ENCODE measurements at regions of chr7 and their contacts with region 1.

Region 1: GRCh38 chr7:139109188-139109982 is at the start of gene ZC3HAV1:
- DNase-seq: peak; percentile 93
- ATAC-seq: peak; percentile 73
- H3K4me3 Mint-ChIP-seq: peak within 1 kb of the TSS; percentile 99
- H3K27ac Mint-ChIP-seq: peak within 1 kb of the TSS; percentile 96
- H3K4me1 Mint-ChIP-seq: peaks cover 27% of the 10 kb centered on the region
- H3K27me3 Mint-ChIP-seq: no peaks in the 10 kb centered on the region
- total RNA-seq, gene ZC3HAV1: 110 to 120 TPM

Region 2: GRCh38 chr7:138459413-138460175 is 649.8 kb before region 1 on chr7:
- CTCF ChIA-PET with region 1: no interaction called
- POLR2A ChIA-PET with region 1: no interaction called
- intact Hi-C with region 1: loop called in 1 of 2 experiments (anchors 5 kb)
- DNase-seq: peak; percentile 99
- ATAC-seq: peak; percentile 88
- H3K4me3 Mint-ChIP-seq: peak overlapping the region; percentile 85
- H3K27ac Mint-ChIP-seq: peak overlapping the region; percentile 85
- H3K4me1 Mint-ChIP-seq: peaks cover 25% of the 10 kb centered on the region
- H3K27me3 Mint-ChIP-seq: no peaks in the 10 kb centered on the region

Region 3: GRCh38 chr7:138625849-138626230 is 483.5 kb before region 1 on chr7:
- CTCF ChIA-PET with region 1: no interaction called
- POLR2A ChIA-PET with region 1: no interaction called
- intact Hi-C with region 1: no loop called
- DNase-seq: peak; percentile 10
- ATAC-seq: peak; percentile 44
- H3K4me3 Mint-ChIP-seq: no peak overlapping the region
- H3K27ac Mint-ChIP-seq: peak overlapping the region; percentile 40
- H3K4me1 Mint-ChIP-seq: peaks cover 42% of the 10 kb centered on the region
- H3K27me3 Mint-ChIP-seq: no peaks in the 10 kb centered on the region

Region 4: DNA sequence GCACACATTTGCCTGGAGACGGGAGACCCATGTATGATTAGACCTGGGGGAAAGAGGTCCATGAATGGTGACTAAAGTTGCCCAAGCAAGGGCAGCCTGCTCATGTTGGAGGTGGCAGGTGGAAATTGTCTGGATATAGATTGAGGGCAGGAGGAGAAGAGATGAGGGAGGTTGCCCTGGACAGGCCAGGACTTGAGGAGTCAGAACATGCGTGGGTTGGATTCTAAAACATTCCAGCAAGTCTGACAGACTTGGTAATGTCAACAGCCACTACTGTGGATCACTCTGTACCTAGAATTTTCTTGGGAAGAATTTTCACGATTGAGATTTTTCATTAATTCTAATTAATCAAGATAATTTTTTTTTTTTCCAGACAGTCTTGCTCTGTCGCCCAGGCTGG is 389.1 kb before region 1 on chr7:
- CTCF ChIA-PET with region 1: no interaction called
- POLR2A ChIA-PET with region 1: no interaction called
- intact Hi-C with region 1: no loop called
- DNase-seq: no peak
- ATAC-seq: no peak
- H3K4me3 Mint-ChIP-seq: no peak overlapping the region
- H3K27ac Mint-ChIP-seq: no peak overlapping the region
- H3K4me1 Mint-ChIP-seq: peaks cover 8% of the 10 kb centered on the region
- H3K27me3 Mint-ChIP-seq: peaks cover 2% of the 10 kb centered on the region

Region 5: DNA sequence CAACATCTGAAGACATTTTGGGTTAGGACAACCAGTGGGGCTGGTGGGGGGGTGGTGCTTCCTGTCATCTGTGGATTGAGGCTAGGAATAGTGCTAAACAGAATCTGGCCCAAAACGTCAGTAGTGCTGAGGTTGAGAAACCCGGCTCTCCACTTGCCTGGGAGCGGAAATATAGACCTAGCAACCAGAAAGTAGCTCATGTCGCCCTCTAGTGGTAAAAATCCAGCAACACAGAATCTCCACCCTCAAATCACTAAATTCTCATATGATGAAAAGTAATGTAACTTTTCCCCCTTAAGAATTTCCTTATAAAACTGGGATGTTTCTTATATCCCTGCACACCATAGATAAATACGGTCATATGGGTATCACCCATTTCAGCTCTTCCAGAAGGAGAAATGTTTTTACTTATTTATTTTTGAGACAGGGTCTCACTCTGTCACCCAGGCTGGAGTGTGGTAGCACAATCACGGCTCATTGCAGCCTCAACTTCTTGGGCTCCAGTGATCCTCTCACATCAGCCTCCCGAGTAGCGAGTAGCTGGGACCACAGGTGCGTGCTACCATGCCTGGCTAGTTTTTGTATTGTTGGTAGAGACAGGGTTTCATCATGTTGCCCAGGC is 34.2 kb before region 1 on chr7:
- CTCF ChIA-PET with region 1: interaction called, 5 read pairs
- POLR2A ChIA-PET with region 1: no interaction called
- intact Hi-C with region 1: loop called in 1 of 2 experiments (anchors 5 kb)
- DNase-seq: peak; percentile 77
- ATAC-seq: peak; percentile 79
- H3K4me3 Mint-ChIP-seq: peak overlapping the region; percentile 24
- H3K27ac Mint-ChIP-seq: peak overlapping the region; percentile 76
- H3K4me1 Mint-ChIP-seq: peaks cover 70% of the 10 kb centered on the region
- H3K27me3 Mint-ChIP-seq: no peaks in the 10 kb centered on the region

Region 6: GRCh38 chr7:139095194-139095659 is 14.2 kb before region 1 on chr7:
- CTCF ChIA-PET with region 1: interaction called, 32 read pairs
- POLR2A ChIA-PET with region 1: interaction called, 27 read pairs
- intact Hi-C with region 1: loop called (anchors 1 kb)
- DNase-seq: peak; percentile 80
- ATAC-seq: peak; percentile 88
- H3K4me3 Mint-ChIP-seq: peak overlapping the region; percentile 70
- H3K27ac Mint-ChIP-seq: peak overlapping the region; percentile 92
- H3K4me1 Mint-ChIP-seq: peaks cover 89% of the 10 kb centered on the region
- H3K27me3 Mint-ChIP-seq: no peaks in the 10 kb centered on the region

Region 7: DNA sequence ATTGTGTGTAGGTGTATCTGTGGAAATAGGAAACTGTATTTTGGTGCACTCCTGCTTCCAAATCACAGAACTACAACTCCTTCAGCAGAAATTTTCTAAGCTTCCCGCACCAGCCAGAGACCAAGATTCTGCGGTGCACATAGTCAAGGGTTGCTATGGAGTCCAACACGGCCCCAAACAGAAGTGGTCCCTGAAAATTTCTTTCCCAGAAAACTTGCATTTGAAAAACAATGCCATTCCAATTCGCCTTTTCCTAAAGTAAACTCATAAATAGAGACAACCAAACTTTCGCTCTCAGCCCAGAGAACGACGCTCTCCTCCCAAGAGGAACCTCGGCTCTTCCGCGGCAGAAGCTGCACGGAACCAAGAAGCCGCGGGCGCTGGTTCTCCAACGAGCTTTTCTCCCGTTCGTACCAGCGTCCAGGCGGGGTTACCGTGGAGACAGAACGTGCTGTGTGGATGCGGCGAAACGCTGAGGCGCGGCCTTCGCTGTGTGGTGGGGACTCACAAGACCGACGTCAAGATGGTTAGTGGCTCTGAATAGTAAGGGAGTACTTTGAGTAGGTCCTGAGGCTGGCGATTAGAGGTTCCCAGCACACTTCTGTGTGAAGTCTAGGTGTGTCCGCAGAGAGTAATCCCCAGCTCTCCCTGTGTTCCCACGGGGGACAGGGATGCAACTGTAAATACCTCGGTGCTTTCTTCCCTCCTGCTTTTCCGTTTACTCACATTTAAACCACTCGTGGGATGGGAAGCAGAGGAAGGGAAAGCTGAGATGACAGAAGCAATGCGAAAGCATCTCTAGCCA is 24.2 kb after region 1 on chr7:
- CTCF ChIA-PET with region 1: interaction called, 8 read pairs
- POLR2A ChIA-PET with region 1: interaction called, 3 read pairs
- intact Hi-C with region 1: loop called (anchors 1 kb)
- DNase-seq: peak; percentile 93
- ATAC-seq: peak; percentile 99
- H3K4me3 Mint-ChIP-seq: peak overlapping the region; percentile 74
- H3K27ac Mint-ChIP-seq: peak overlapping the region; percentile 71
- H3K4me1 Mint-ChIP-seq: peaks cover 21% of the 10 kb centered on the region
- H3K27me3 Mint-ChIP-seq: no peaks in the 10 kb centered on the region

Region 8: DNA sequence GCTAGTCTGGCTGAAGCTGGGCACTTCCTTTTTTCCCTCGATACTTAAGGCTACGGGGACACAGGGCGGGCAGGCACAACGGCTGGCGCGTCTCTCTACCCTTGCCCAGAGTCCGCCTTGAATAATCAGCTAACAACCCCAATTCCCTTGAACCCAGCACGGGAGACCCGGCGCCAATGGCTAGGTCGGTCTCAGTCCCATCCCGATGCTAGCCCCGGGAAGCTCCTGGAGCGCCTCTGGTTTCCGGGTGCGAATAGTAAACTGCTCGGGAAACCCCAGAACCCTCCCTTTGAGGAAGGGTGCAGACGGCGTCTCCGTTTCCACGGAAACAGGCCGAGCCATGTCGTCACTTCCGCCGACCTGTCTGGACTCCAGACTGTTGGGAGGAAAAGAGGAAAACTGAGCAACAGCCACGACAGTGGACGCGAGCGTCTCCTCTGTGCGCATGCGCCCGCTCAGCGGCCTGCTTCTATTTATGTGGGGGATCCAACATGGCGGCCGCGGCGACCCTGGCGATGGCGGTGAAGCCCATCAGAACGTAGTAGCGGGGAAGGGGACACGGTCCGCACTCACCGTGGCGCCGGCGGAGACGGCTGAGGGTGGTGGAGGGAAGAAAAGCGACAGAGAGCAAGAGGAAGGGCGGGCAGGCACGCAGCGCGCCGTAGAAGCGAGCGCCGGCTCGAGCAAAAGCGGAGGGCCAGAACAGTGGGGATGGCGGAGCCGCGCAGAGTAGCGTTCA is 121.6 kb after region 1 on chr7 and contains the start of gene UBN2:
- CTCF ChIA-PET with region 1: no interaction called
- POLR2A ChIA-PET with region 1: no interaction called
- intact Hi-C with region 1: loop called (anchors 2 to 5 kb)
- DNase-seq: peak; percentile 96
- ATAC-seq: peak; percentile 88
- H3K4me3 Mint-ChIP-seq: peak within 1 kb of the TSS; percentile 98
- H3K27ac Mint-ChIP-seq: peak within 1 kb of the TSS; percentile 93
- H3K4me1 Mint-ChIP-seq: peaks cover 20% of the 10 kb centered on the region
- H3K27me3 Mint-ChIP-seq: peaks cover 3% of the 10 kb centered on the region
- total RNA-seq, gene UBN2: 8.3 to 11.8 TPM

Region 9: GRCh38 chr7:139457153-139457940 is 348.0 kb after region 1 on chr7:
- CTCF ChIA-PET with region 1: no interaction called
- POLR2A ChIA-PET with region 1: no interaction called
- intact Hi-C with region 1: no loop called
- DNase-seq: no peak
- ATAC-seq: no peak
- H3K4me3 Mint-ChIP-seq: no peak overlapping the region
- H3K27ac Mint-ChIP-seq: no peak overlapping the region
- H3K4me1 Mint-ChIP-seq: no peaks in the 10 kb centered on the region
- H3K27me3 Mint-ChIP-seq: no peaks in the 10 kb centered on the region

Region 10: GRCh38 chr7:140062528-140063299 is 953.3 kb after region 1 on chr7 and contains the start of gene PARP12:
- CTCF ChIA-PET with region 1: no interaction called
- POLR2A ChIA-PET with region 1: no interaction called
- intact Hi-C with region 1: loop called in 1 of 2 experiments (anchors 5 kb)
- DNase-seq: peak; percentile 91
- ATAC-seq: peak; percentile 65
- H3K4me3 Mint-ChIP-seq: peak within 1 kb of the TSS; percentile 78
- H3K27ac Mint-ChIP-seq: peak within 1 kb of the TSS; percentile 75
- H3K4me1 Mint-ChIP-seq: peaks cover 36% of the 10 kb centered on the region
- H3K27me3 Mint-ChIP-seq: no peaks in the 10 kb centered on the region
- total RNA-seq, gene PARP12: 25.7 to 28.7 TPM

Measured in activated CD4-positive, alpha-beta T cell treated with anti-CD3 and anti-CD28 coated beads for 36 hours (primary cell).